SK-N-SH (cell line): ENCODE measurements at regions of chr6 and their contacts with region 1.

Region 1: DNA sequence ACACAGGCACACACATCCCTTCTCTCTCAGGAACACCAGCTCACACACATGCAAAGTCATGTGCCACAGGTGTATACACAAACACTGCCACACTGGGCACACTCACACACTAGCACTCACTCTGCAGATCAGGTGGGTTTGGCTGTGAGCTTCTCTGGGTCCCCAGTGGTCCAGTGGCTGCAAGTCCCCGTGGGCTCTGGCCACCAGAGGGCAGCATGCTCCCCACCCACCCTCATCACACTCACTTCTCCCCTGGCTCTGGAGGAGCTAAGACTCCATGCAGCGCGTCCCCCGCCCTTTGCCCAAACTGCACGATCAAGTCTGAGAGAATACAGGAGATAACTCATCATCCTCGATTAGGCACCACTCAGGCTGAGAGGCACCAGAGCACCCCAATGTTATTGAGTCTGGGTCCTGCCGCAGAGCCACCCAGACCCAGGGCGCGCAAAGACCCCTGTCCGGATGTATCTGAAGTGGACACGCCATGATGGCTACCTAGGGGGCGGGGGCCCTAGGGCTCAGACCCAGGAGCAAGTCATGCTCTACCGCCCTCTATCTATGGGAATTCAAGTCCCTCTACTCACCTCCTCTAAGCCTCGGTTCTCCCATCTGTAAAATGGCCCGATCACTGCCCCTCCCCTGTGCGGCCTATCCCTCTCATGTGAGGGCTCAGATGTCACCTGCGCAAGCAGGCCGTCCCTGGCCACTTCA is 90.5 kb downstream of the GRM4 start:
- DNase-seq: peak; percentile 92
- H3K4me3 ChIP-seq: no peak overlapping the region; a peak in 1 of 4 replicates
- H3K27ac ChIP-seq: no peak overlapping the region
- H3K4me1 ChIP-seq: peaks cover 0 to 10% of the 10 kb centered on the region in 2 experiments; a peak in 1 of 4 replicates
- H3K27me3 ChIP-seq: no peaks in the 10 kb centered on the region; the same call in none of the 2 replicates
- CTCF ChIP-seq: peak; percentile 84
- EP300 ChIP-seq: no peak
- RAD21 ChIP-seq: peak; percentile 73

Region 2: DNA sequence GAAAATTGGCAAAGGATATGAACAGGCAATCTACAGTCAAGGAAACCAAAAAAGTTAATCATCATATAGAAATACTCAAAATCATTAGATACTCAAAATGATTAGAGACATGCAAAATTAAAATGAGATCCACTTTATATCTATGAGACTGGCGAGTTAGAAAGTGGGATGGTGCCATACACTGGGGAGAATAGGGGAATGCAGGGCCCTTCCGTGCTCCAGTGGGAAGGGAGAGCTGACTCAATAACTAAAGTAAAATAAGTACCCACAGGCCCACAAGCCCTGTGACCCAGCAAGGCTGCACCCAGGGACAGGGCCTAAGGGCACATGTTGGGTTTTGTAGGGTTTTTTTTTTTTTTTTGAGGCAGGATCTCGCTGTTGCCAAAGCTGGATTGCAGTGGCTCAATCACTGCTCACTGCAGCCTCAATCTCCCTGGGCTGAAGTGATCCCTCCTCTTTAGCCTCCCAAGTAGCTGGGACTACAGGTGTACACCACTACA is 520.2 kb before region 1 on chr6:
- CTCF ChIA-PET with region 1: no interaction called
- POLR2A ChIA-PET with region 1: no interaction called
- DNase-seq: no peak
- H3K4me3 ChIP-seq: no peak overlapping the region
- H3K27ac ChIP-seq: no peak overlapping the region
- H3K4me1 ChIP-seq: no peaks in the 10 kb centered on the region
- H3K27me3 ChIP-seq: no peaks in the 10 kb centered on the region
- CTCF ChIP-seq: 0 out of 2 replicates have a peak, but pooled peaks have one; percentile 7
- EP300 ChIP-seq: no peak
- RAD21 ChIP-seq: peak; percentile 33

Region 3: GRCh38 chr6:33744001-33744848 is 311.2 kb before region 1 on chr6:
- CTCF ChIA-PET with region 1: interaction called, 25 read pairs
- POLR2A ChIA-PET with region 1: no interaction called
- DNase-seq: peak; percentile 90
- H3K4me3 ChIP-seq: no peak overlapping the region; a peak in 1 of 4 replicates
- H3K27ac ChIP-seq: no peak overlapping the region
- H3K4me1 ChIP-seq: peaks cover 15 to 37% of the 10 kb centered on the region in 2 experiments; a peak in 3 of 4 replicates
- H3K27me3 ChIP-seq: no peaks in the 10 kb centered on the region
- CTCF ChIP-seq: peak; percentile 93
- EP300 ChIP-seq: no peak
- RAD21 ChIP-seq: peak; percentile 83

Region 4: GRCh38 chr6:34044945-34045595 is 10.3 kb before region 1 on chr6:
- CTCF ChIA-PET with region 1: interaction called, 26 read pairs
- POLR2A ChIA-PET with region 1: no interaction called
- DNase-seq: no peak
- H3K4me3 ChIP-seq: no peak overlapping the region
- H3K27ac ChIP-seq: peak overlapping the region in 1 of 2 experiments; percentile 31; a peak in 1 of 4 replicates
- H3K4me1 ChIP-seq: peaks cover 0 to 20% of the 10 kb centered on the region in 2 experiments; a peak in 1 of 4 replicates
- H3K27me3 ChIP-seq: peaks cover 14% of the 10 kb centered on the region; the same call in 1 of the 2 replicates
- CTCF ChIP-seq: no peak
- EP300 ChIP-seq: no peak
- RAD21 ChIP-seq: no peak

Region 5: GRCh38 chr6:34094474-34095135 is 39.2 kb after region 1 on chr6:
- CTCF ChIA-PET with region 1: interaction called, 13 read pairs
- POLR2A ChIA-PET with region 1: no interaction called
- DNase-seq: no peak
- H3K4me3 ChIP-seq: no peak overlapping the region
- H3K27ac ChIP-seq: no peak overlapping the region
- H3K4me1 ChIP-seq: no peaks in the 10 kb centered on the region; a peak in 1 of 4 replicates
- H3K27me3 ChIP-seq: 0 out of 2 replicates have a peak, but pooled peaks cover 10% of the 10 kb centered on the region
- CTCF ChIP-seq: no peak
- EP300 ChIP-seq: no peak
- RAD21 ChIP-seq: no peak

Region 6: GRCh38 chr6:34132486-34133185 is 77.3 kb after region 1 on chr6:
- CTCF ChIA-PET with region 1: interaction called, 27 read pairs
- POLR2A ChIA-PET with region 1: no interaction called
- DNase-seq: no peak
- H3K4me3 ChIP-seq: no peak overlapping the region
- H3K27ac ChIP-seq: no peak overlapping the region
- H3K4me1 ChIP-seq: peaks cover 0 to 3% of the 10 kb centered on the region in 2 experiments; a peak in 1 of 4 replicates
- H3K27me3 ChIP-seq: peaks cover 5% of the 10 kb centered on the region; the same call in 1 of the 2 replicates
- CTCF ChIP-seq: no peak
- EP300 ChIP-seq: no peak
- RAD21 ChIP-seq: no peak

Region 7: GRCh38 chr6:34154668-34155447 is 99.5 kb after region 1 on chr6:
- CTCF ChIA-PET with region 1: interaction called, 125 read pairs
- POLR2A ChIA-PET with region 1: interaction called, 3 read pairs
- DNase-seq: peak; percentile 98
- H3K4me3 ChIP-seq: peak overlapping the region; percentile 17 to 59; a peak in 2 of 4 replicates
- H3K27ac ChIP-seq: no peak overlapping the region
- H3K4me1 ChIP-seq: peaks cover 0 to 2% of the 10 kb centered on the region in 2 experiments; a peak in 1 of 4 replicates
- H3K27me3 ChIP-seq: peaks cover 25% of the 10 kb centered on the region
- CTCF ChIP-seq: peak; percentile 89
- EP300 ChIP-seq: no peak
- RAD21 ChIP-seq: peak; percentile 95